HepG2 (cell line): ENCODE measurements at regions of chr12 and their contacts with region 1.

Region 1: GRCh38 chr12:94532490-94533422 is 73.1 kb upstream of the CEP83 start:
- DNase-seq: peak; percentile 54
- ATAC-seq: peak; percentile 81
- H3K4me3 ChIP-seq: no peak overlapping the region
- H3K27ac ChIP-seq: no peak overlapping the region
- H3K4me1 ChIP-seq: peaks cover 40% of the 10 kb centered on the region
- H3K27me3 ChIP-seq: peaks cover 0 to 3% of the 10 kb centered on the region in 2 experiments; a peak in 1 of 5 replicates
- CTCF ChIP-seq: peak; percentile 91
- EP300 ChIP-seq: no peak
- POLR2A ChIP-seq: no peak
- RAD21 ChIP-seq: peak; percentile 88

Region 2: DNA sequence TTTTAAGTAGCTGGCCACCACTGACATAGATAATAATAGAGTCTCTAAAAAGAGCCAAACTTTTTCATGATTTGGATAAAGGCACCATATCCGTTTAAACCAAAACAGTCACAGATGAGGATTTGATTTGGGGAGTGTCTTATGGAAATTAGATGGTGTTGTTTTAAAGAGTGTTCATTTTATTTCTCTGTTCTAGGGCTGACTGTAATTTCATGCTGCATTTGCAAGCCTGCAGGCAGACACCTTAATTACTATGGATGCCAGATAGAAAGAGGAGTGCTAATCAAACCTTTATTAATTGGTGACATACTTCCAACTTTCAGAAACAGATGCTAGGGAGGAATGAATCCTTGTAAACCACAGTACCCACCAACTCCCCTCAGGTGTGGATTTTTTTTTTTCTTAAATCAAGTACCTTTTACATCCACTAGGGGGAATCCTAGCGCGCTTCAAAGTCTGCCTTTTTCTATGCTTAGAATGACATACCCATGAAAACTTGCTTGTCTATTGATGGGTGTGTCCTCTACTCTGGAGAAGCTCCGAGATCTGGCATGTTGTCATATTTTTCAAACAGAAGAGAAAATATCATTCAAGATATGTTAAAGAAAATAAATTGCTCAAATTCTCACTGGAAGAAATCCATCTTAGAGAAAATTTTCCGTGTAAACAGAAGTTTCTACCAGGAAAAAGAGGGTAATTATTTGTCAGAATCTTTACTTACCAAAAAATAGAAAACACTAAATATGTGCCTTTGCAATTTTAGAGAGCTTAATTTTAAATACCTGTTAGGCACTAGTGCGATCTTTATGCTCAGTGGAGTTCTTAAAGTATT is 398.6 kb before region 1 on chr12:
- CTCF ChIA-PET with region 1: interaction called, 22 read pairs
- POLR2A ChIA-PET with region 1: no interaction called
- in situ Hi-C with region 1: no loop called
- intact Hi-C with region 1: loop called (anchors 1 kb)
- DNase-seq: peak; percentile 47
- ATAC-seq: peak; percentile 72
- H3K4me3 ChIP-seq: no peak overlapping the region
- H3K27ac ChIP-seq: no peak overlapping the region
- H3K4me1 ChIP-seq: peaks cover 6% of the 10 kb centered on the region; the same call in 1 of the 2 replicates
- H3K27me3 ChIP-seq: peaks cover 0 to under 1% of the 10 kb centered on the region in 2 experiments; a peak in 2 of 5 replicates
- CTCF ChIP-seq: peak; percentile 64
- EP300 ChIP-seq: no peak
- POLR2A ChIP-seq: no peak
- RAD21 ChIP-seq: peak; percentile 47; the same call in 1 of the 2 replicates

Region 3: GRCh38 chr12:94266796-94267536 is 265.8 kb before region 1 on chr12:
- CTCF ChIA-PET with region 1: no interaction called
- POLR2A ChIA-PET with region 1: no interaction called
- in situ Hi-C with region 1: loop called (anchors 5 kb)
- intact Hi-C with region 1: no loop called
- DNase-seq: no peak
- ATAC-seq: no peak
- H3K4me3 ChIP-seq: no peak overlapping the region
- H3K27ac ChIP-seq: no peak overlapping the region
- H3K4me1 ChIP-seq: no peaks in the 10 kb centered on the region
- H3K27me3 ChIP-seq: no peaks in the 10 kb centered on the region
- CTCF ChIP-seq: no peak
- EP300 ChIP-seq: no peak
- POLR2A ChIP-seq: no peak
- RAD21 ChIP-seq: no peak

Region 4: DNA sequence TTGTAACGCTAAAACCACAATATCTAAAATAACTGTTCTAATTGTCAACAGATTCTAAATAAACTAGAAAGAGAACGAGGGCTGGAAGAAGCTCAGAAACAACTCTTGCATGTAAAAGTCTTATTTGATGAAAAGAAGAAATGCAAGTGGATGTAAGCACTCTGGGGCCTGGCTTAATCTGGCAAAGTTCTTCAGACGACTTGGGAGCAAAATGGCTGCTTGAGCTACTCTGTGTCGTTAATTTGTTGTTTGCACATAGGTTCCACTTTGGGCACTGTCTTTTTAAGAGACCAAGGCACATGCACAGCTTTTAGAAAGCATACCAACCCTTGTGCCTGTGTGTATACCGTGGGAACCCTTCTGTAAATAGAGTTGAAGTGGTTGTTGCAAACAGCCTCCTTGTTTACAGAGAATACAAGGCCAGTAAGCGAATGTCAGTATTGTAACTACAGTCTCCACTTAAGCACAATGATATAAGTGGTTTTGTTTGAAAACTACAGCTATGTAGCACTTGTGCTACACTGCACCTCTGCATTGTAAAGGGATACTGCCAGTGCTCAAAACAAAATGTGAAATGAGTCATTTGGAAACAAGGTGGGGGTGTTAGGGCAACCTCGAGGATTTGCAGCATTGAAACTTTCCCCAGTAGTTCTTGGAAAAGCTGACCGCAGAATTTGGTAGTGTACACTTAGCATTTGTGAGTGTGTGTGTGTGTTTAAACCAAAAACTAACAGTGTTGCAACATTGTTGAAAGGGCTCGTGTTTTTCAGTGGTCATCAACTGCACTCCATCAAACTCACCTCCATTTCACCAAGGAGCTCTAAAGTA is 227.4 kb before region 1 on chr12:
- CTCF ChIA-PET with region 1: no interaction called
- POLR2A ChIA-PET with region 1: no interaction called
- in situ Hi-C with region 1: no loop called
- intact Hi-C with region 1: loop called (anchors 10 kb)
- DNase-seq: peak; percentile 61
- ATAC-seq: peak; percentile 82
- H3K4me3 ChIP-seq: no peak overlapping the region
- H3K27ac ChIP-seq: peak overlapping the region; percentile 35
- H3K4me1 ChIP-seq: peaks cover 22% of the 10 kb centered on the region
- H3K27me3 ChIP-seq: no peaks in the 10 kb centered on the region
- CTCF ChIP-seq: no peak
- EP300 ChIP-seq: no peak; a peak in 1 of 4 replicates
- POLR2A ChIP-seq: no peak
- RAD21 ChIP-seq: no peak

Region 5: DNA sequence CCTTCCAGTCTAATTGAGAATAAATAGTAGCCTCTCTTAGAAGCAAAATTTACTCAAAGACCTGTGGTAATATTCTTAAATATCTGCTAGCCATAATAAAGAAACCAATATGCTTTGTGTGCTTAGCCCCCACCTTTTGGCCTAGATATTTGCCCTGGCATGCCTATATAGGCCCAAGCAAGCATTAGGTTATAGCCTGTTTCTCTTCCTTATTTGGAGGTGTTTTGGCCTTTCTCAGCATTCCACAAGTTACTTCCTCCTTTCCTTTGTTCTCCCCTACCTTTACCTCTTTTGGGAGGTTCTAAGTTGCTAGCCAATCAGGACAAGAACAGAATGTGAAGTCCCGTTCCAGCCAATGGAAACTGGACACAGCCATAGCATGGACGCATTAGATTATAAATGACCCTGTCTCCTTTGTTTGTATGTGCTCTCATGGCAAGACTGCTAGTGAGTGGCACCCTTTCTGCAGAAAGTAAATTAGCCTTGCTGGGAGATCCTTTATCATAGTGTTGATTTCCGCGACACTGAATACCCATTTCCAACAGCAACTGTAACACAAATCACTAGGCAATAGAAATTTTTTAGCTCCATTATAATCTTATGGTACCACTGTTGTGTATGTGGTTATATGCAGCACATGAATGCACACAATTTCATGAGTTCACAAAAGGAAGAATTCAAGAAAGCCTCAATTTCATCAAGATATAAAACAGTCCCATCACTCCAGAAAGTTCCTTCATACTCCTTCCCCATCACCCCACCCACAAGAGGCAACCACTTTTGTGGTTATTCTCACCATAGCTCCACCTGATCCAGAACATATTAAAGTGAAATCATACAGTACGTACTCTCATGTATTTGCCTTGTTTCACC is 110.7 kb before region 1 on chr12:
- CTCF ChIA-PET with region 1: no interaction called
- POLR2A ChIA-PET with region 1: no interaction called
- in situ Hi-C with region 1: no loop called
- intact Hi-C with region 1: no loop called
- DNase-seq: no peak
- ATAC-seq: no peak
- H3K4me3 ChIP-seq: no peak overlapping the region
- H3K27ac ChIP-seq: no peak overlapping the region
- H3K4me1 ChIP-seq: 0 out of 2 replicates have a peak, but pooled peaks cover 10% of the 10 kb centered on the region
- H3K27me3 ChIP-seq: no peaks in the 10 kb centered on the region
- CTCF ChIP-seq: no peak
- EP300 ChIP-seq: no peak
- POLR2A ChIP-seq: no peak
- RAD21 ChIP-seq: no peak

Region 6: DNA sequence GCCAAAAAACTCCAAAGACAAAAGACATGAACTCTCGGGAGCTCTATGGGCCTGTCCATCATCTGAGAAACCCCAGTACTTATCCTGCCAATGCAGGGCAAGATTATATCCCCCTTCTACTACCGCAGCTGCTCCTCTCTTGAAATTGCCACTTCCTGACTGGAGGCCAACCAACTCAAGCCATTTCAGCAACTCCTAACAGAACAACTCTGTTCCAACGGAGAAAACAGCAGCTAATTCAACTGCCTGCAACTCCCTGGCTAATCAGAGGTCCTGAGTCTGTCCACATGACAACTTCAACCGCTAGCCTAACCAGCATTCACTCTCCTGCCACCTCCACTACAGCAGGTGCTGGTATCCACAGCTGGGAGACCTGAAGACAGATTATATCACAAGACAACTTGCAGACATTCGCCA is 97.2 kb before region 1 on chr12:
- CTCF ChIA-PET with region 1: interaction called, 4 read pairs
- POLR2A ChIA-PET with region 1: no interaction called
- in situ Hi-C with region 1: no loop called
- intact Hi-C with region 1: loop called (anchors 2 kb)
- DNase-seq: no peak
- ATAC-seq: no peak
- H3K4me3 ChIP-seq: no peak overlapping the region
- H3K27ac ChIP-seq: no peak overlapping the region
- H3K4me1 ChIP-seq: peaks cover 39% of the 10 kb centered on the region
- H3K27me3 ChIP-seq: no peaks in the 10 kb centered on the region
- CTCF ChIP-seq: no peak
- EP300 ChIP-seq: no peak
- POLR2A ChIP-seq: no peak
- RAD21 ChIP-seq: no peak

Region 7: GRCh38 chr12:94488463-94488862 is 44.3 kb before region 1 on chr12:
- CTCF ChIA-PET with region 1: no interaction called
- POLR2A ChIA-PET with region 1: no interaction called
- in situ Hi-C with region 1: no loop called
- intact Hi-C with region 1: loop called (anchors 5 kb)
- DNase-seq: no peak
- ATAC-seq: no peak
- H3K4me3 ChIP-seq: no peak overlapping the region
- H3K27ac ChIP-seq: no peak overlapping the region
- H3K4me1 ChIP-seq: no peaks in the 10 kb centered on the region
- H3K27me3 ChIP-seq: no peaks in the 10 kb centered on the region
- CTCF ChIP-seq: no peak
- EP300 ChIP-seq: no peak
- POLR2A ChIP-seq: no peak
- RAD21 ChIP-seq: no peak